Motor neuron (in vitro differentiated cells): ENCODE measurements at regions of chr11 and their contacts with region 1.

Region 1: GRCh38 chr11:111601979-111602864 is at the start of gene SIK2:
- ATAC-seq: peak; percentile 83 to 93 (median 90)
- H3K4me3 ChIP-seq: peak within 1 kb of the TSS; percentile 76 to 91 (median 82)
- H3K27ac ChIP-seq: peak within 1 kb of the TSS; percentile 81 to 85
- H3K4me1 ChIP-seq: peaks cover 3 to 17% of the 10 kb centered on the region in 2 donors
- total RNA-seq, gene SIK2: 8.5 to 22.5 (median 12.1) TPM

Region 2: GRCh38 chr11:111777094-111778046 is 175.1 kb after region 1 on chr11:
- in situ Hi-C with region 1: loop called in 6 of 9 experiments (anchors 10 to 25 kb)
- ATAC-seq: peak; percentile 86 to 98 (median 91)
- H3K4me3 ChIP-seq: no peak overlapping the region
- H3K27ac ChIP-seq: no peak overlapping the region
- H3K4me1 ChIP-seq: peaks cover 7 to 10% of the 10 kb centered on the region in 2 donors

Region 3: DNA sequence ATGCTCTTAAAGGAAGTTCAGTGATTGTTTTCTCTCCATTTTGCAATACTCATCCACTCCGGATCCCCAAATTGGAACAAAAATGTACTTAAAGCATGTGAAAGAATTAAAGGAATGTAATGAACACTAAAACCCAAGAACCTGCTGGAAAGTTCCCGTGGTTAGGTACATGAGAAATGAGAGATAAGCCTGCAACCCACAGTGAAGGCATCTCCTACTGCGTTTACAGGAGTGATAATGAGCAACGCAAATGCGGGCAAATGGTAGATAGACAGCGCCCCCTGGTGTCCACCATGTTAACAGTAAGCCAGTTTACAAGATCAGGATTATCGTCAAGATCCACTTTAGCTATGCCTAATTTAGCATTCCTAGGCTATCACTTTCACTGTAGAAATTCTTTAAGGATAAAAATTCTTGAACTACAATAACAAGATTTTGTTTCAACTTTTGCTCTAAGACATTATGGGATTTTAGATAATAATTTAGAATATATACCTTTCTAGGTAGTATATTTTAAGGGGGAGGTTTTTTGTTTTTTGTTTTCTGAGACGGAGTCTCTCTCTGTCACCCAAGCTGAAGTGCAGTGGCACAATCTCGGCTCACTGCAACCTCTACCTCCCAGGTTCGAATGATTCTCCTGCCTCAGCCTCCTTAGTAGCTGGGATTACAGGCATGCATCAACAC is 239.3 kb after region 1 on chr11:
- in situ Hi-C with region 1: loop called in 2 of 9 experiments (anchors 10 to 25 kb)
- ATAC-seq: peak; percentile 89 to 98 (median 94)
- H3K4me3 ChIP-seq: no peak overlapping the region
- H3K27ac ChIP-seq: no peak overlapping the region
- H3K4me1 ChIP-seq: no peaks in the 10 kb centered on the region